Mammary epithelial cell (primary cell): ENCODE measurements at regions of chr15 and their contacts with region 1.

Region 1: GRCh38 chr15:81758818-81759284 is 287.0 kb downstream of the MEX3B start:
- DNase-seq: no peak
- H3K4me3 ChIP-seq: no peak overlapping the region
- H3K27ac ChIP-seq: no peak overlapping the region
- H3K4me1 ChIP-seq: no peaks in the 10 kb centered on the region
- H3K27me3 ChIP-seq: no peaks in the 10 kb centered on the region
- CTCF ChIP-seq: no peak

Region 2: GRCh38 chr15:81795899-81796298 is 37.0 kb after region 1 on chr15:
- CTCF ChIA-PET with region 1: no interaction called
- dilution Hi-C with region 1: loop called (anchors 5 kb)
- in situ Hi-C with region 1: no loop called
- intact Hi-C with region 1: no loop called
- DNase-seq: no peak
- H3K4me3 ChIP-seq: no peak overlapping the region
- H3K27ac ChIP-seq: no peak overlapping the region
- H3K4me1 ChIP-seq: no peaks in the 10 kb centered on the region
- H3K27me3 ChIP-seq: no peaks in the 10 kb centered on the region
- CTCF ChIP-seq: no peak